Endothelial cell of umbilical vein (primary cell): ENCODE measurements at regions of chr1 and their contacts with region 1.

Region 1: GRCh38 chr1:178238722-178239510 is 145.0 kb downstream of the RASAL2 start:
- DNase-seq: peak; percentile 72
- H3K4me3 ChIP-seq: no peak overlapping the region
- H3K27ac ChIP-seq: peak overlapping the region; percentile 53
- H3K4me1 ChIP-seq: peaks cover 36% of the 10 kb centered on the region
- H3K27me3 ChIP-seq: no peaks in the 10 kb centered on the region
- CTCF ChIP-seq: no peak
- POLR2A ChIP-seq: no peak

Region 2: GRCh38 chr1:178223289-178223688 is 15.6 kb before region 1 on chr1:
- CTCF ChIA-PET with region 1: interaction called, 5 read pairs
- POLR2A ChIA-PET with region 1: no interaction called
- dilution Hi-C with region 1: no loop called
- intact Hi-C with region 1: loop called (anchors 2 kb)
- DNase-seq: no peak
- H3K4me3 ChIP-seq: no peak overlapping the region
- H3K27ac ChIP-seq: no peak overlapping the region
- H3K4me1 ChIP-seq: no peaks in the 10 kb centered on the region
- H3K27me3 ChIP-seq: no peaks in the 10 kb centered on the region
- CTCF ChIP-seq: no peak
- POLR2A ChIP-seq: no peak

Region 3: GRCh38 chr1:178254433-178254832 is 15.5 kb after region 1 on chr1:
- CTCF ChIA-PET with region 1: interaction called, 10 read pairs
- POLR2A ChIA-PET with region 1: no interaction called
- dilution Hi-C with region 1: no loop called
- intact Hi-C with region 1: no loop called
- DNase-seq: no peak
- H3K4me3 ChIP-seq: no peak overlapping the region
- H3K27ac ChIP-seq: no peak overlapping the region
- H3K4me1 ChIP-seq: peaks cover 12% of the 10 kb centered on the region
- H3K27me3 ChIP-seq: no peaks in the 10 kb centered on the region
- CTCF ChIP-seq: no peak
- POLR2A ChIP-seq: no peak